Posterior vena cava (tissue), 2 donors: ENCODE measurements at regions of chr15 and their contacts with region 1.

Region 1: DNA sequence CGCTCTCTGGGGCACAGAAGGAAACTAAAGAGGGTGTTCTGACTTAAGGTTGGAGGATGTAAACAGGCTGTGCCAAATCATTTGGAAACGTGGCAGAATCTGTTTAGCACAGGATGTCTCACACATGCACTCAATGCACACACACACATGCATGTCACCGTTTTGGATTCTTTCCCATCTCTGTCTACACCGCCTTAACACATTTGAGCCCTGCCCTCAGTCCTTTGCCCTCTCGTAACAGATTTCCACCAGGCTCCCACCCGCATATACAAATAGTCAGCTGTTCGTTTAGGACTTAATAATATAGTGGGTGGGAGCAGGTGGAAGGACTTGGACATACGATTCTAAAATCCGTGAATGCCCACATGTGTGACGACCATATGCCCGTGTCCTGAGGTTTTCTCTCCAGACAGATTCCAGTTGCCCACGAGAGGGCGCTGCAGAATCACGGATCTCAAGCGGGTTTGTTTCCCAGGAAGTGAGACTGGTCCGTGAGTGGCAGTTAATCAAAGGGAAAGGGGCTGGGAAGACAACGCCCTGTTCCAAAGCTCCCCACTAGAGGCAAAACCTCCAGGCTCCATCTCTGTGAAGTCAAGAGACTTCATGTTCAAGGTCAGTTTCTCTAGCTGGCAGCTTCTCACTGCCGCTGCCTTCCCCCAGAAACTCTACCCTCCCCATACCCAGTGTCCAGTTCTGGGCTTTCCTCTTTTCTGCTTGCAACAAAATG is 44.5 kb downstream of the NOX5 start:
- DNase-seq: peak; percentile 95

Region 2: DNA sequence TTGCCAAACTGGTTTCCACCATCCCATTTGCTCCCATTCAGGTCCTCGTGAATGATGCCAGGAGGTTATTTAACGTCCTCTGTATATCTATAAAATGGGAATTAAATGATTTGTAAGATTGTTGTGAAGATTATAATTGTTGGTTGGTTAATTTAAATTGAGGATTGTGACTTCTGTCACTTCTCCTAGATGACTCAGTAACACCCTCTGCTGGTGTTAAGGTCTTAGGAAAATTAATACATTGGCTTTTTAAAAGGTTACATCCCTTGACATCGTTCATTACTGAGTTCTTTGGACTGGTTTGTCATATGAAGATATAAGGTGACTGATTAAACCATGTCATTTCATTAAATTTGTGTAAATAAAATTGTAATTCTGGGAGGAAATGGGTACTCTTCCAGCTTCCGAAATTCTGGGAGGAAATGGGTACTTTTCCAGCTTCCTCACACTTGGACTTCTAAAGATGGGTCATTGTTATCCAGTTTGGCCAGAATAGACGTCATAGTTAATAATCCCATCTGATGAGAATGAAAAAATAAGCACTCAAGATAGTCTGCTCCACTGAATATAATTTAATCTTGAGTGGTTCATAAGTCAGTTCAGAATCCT is 206.5 kb after region 1 on chr15:
- intact Hi-C with region 1: loop called (anchors 5 to 10 kb)
- DNase-seq: no peak

Region 3: GRCh38 chr15:69272139-69272538 is 213.1 kb after region 1 on chr15:
- intact Hi-C with region 1: loop called (anchors 5 to 10 kb)
- DNase-seq: no peak

Region 4: GRCh38 chr15:69394556-69395282 is 335.7 kb after region 1 on chr15:
- intact Hi-C with region 1: loop called (anchors 2 to 5 kb)
- DNase-seq: peak; percentile 95